ENCODE measurements at regions of chr12 and their contacts with region 1.

Region 1: DNA sequence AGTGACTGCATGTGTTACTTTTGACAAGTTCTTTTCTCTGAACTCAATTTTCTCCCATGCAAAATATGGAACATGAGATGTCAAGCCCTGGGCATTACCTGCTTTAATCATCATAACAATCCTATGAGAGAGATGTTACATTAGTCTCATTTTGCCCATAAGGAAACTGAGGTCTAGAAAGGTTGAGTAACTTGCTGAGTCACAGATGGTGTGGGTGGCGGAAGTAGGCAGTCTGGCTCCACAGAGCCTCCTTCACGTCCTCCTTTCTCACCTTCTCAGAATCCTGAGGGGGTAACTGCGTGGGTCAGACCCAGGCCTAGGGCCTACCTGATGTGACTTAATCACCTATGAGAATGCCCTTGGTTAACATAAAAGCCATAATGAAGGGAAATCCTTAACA is 50.7 kb downstream of the TMTC1 start:
- DNase-seq: no peak
- ATAC-seq: no peak
- H3K4me3 ChIP-seq: no peak overlapping the region
- H3K4me3 Mint-ChIP-seq: no peak overlapping the region
- H3K27ac ChIP-seq: no peak overlapping the region
- H3K27ac Mint-ChIP-seq: no peak overlapping the region
- H3K4me1 ChIP-seq: no peaks in the 10 kb centered on the region
- H3K4me1 Mint-ChIP-seq: no peaks in the 10 kb centered on the region
- H3K27me3 ChIP-seq: no peaks in the 10 kb centered on the region
- H3K27me3 Mint-ChIP-seq: peaks cover 2% of the 10 kb centered on the region
- CTCF ChIP-seq: no peak

Region 2: GRCh38 chr12:28899951-28900350 is 833.1 kb before region 1 on chr12:
- CTCF ChIA-PET with region 1: no interaction called
- POLR2A ChIA-PET with region 1: no interaction called
- intact Hi-C with region 1: loop called in 1 of 2 experiments (anchors 5 kb)
- DNase-seq: no peak
- ATAC-seq: no peak
- H3K4me3 ChIP-seq: no peak overlapping the region
- H3K4me3 Mint-ChIP-seq: no peak overlapping the region
- H3K27ac ChIP-seq: no peak overlapping the region
- H3K27ac Mint-ChIP-seq: no peak overlapping the region
- H3K4me1 ChIP-seq: no peaks in the 10 kb centered on the region
- H3K4me1 Mint-ChIP-seq: no peaks in the 10 kb centered on the region
- H3K27me3 ChIP-seq: no peaks in the 10 kb centered on the region
- H3K27me3 Mint-ChIP-seq: no peaks in the 10 kb centered on the region
- CTCF ChIP-seq: no peak

Region 3: DNA sequence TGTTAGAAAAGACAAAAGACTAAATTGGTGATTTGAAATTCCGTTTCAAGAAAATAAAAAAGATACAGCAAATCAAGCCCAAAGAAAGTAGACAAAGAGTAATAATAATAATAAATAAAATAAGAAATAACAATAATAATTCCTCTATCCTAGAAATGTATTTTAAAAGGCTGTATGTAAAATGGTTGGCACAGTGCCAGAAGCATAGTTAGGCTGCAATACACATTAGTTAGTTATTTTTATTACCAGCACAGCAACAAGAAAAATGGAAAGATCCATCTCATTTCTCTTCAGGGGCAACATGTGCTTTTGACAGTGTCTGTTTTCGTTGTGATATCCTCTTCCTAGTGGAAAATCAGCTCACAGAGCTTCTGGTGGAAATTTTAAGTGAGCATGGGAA is 224.8 kb after region 1 on chr12:
- CTCF ChIA-PET with region 1: no interaction called
- POLR2A ChIA-PET with region 1: no interaction called
- intact Hi-C with region 1: no loop called
- DNase-seq: no peak
- ATAC-seq: no peak
- H3K4me3 ChIP-seq: no peak overlapping the region
- H3K4me3 Mint-ChIP-seq: no peak overlapping the region
- H3K27ac ChIP-seq: no peak overlapping the region
- H3K27ac Mint-ChIP-seq: no peak overlapping the region
- H3K4me1 ChIP-seq: no peaks in the 10 kb centered on the region
- H3K4me1 Mint-ChIP-seq: no peaks in the 10 kb centered on the region
- H3K27me3 ChIP-seq: no peaks in the 10 kb centered on the region
- H3K27me3 Mint-ChIP-seq: no peaks in the 10 kb centered on the region
- CTCF ChIP-seq: no peak

Measured in CD8-positive, alpha-beta T cell (primary cell).